Gastrocnemius medialis (tissue), 4 donors: ENCODE measurements at regions of chr5 and their contacts with region 1.

Region 1: DNA sequence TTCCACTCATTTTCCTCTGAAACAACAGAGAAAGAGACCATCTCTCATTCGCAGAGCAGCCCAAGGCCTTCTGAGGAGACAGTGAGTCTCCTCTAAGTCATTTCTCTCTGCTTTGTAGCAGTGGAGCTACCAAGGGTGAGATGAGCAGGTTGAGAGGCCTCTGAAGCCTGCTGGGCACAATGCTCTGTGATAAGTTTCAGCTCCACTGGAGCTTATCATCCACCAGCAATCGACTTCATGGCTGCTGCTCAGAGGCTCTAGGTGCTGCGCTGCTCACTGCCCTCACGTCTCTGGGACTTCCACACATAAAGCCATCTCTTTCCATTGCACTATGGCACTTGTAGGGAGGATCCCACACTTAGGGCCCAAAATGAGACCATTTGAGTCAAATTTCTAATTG is 96.3 kb downstream of the CMYA5 start:
- DNase-seq: no peak
- ATAC-seq: no peak
- H3K4me3 ChIP-seq: no peak overlapping the region
- H3K27ac ChIP-seq: peak overlapping the region; percentile 82 to 86 (median 84)
- H3K4me1 ChIP-seq: peaks cover 51 to 53% of the 10 kb centered on the region in 2 donors
- H3K27me3 ChIP-seq: no peaks in the 10 kb centered on the region
- CTCF ChIP-seq: no peak
- POLR2A ChIP-seq: no peak

Region 2: DNA sequence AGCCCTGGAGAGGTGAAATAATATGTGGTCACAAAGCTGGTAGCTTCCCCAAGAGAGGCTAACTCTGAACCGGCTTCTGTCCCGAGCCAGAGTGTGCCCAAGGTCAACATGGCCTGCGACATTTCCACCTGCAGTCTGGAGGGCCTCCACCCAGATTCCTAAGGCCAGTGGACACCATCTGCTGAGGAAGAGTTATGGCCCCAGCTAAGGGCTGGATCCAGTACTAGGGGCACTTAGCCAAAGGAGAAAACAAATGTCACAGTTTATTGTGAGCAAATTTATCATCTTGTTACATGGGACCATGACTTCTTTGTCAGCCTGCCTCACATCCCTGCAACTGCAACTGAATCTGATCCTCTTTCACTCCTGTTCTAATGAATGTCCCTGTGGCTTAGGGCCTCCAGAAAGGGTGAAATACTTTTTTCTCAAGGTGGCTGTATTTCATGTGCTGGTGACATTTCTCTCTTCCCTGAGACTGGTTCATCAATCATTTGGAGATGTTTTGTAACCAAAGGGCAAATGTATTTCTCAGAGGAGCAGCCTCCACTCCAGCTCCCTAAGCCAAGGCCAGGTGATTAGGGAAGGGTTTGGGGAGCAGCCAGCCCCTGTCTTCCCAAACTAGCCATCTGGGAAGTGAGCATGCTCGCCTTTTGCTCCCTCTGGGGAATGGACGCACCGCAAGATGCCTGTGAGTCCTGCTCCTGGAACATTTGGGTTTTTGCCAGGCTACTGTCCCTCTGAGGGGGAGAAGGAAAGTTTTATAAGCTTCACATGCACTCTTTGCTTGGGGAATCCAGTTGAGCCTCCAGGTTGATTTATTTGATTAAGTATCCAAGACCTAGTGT is 52.0 kb after region 1 on chr5:
- in situ Hi-C with region 1: no loop called
- intact Hi-C with region 1: loop called (anchors 10 kb)
- DNase-seq: peak in 1 of 2 donors; percentile 64
- ATAC-seq: peak; percentile 29 to 41
- H3K4me3 ChIP-seq: no peak overlapping the region
- H3K27ac ChIP-seq: peak overlapping the region; percentile 14 to 62 (median 48)
- H3K4me1 ChIP-seq: peaks cover 36 to 44% of the 10 kb centered on the region in 2 donors
- H3K27me3 ChIP-seq: no peaks in the 10 kb centered on the region
- CTCF ChIP-seq: no peak
- POLR2A ChIP-seq: no peak

Region 3: DNA sequence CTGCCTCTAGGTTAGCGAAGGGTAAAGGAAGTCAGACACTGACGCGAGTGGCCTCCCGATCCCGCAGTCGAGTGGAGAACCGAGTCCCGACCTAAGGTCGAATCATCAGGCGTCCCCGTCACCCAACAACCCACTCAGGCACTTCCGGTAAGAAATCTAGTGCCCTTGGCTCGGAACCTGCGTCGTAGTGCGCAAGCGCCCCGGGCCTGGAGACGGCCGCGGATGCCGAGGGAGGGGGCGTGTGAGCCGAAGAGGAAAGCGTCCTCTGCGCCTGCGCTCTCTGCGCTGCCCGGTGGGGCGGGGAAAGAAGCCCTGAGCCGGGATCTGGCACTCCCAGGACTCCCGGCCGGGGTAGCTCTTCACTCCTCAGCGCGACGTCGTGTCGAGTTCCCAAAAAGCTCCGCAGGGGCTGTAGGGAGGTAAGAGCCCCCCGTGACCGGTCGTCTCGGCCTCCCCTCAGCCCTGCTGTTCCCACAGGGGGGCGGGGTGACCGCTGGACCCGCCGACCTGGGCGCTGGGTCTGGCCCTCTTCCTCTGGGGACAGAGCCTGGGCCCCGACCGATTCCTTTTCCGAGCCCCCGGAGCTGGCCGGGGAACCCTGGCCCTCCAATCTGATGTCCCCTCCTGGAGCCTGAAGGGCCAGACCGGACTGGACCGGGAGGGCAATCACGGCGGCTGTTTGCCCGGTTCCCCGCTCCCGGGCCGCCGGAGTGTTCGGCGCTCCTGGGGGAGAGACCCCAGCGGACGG is 621.9 kb after region 1 on chr5 and contains the start of gene ZFYVE16:
- in situ Hi-C with region 1: no loop called
- intact Hi-C with region 1: no loop called
- DNase-seq: peak; percentile 95 to 97
- ATAC-seq: peak; percentile 94 to 95
- H3K4me3 ChIP-seq: peak within 1 kb of the TSS; percentile 88 to 98 (median 93)
- H3K27ac ChIP-seq: peak within 1 kb of the TSS; percentile 94 to 99 (median 96)
- H3K4me1 ChIP-seq: peaks cover 18 to 22% of the 10 kb centered on the region in 2 donors
- H3K27me3 ChIP-seq: no peaks in the 10 kb centered on the region
- CTCF ChIP-seq: peak; percentile 48 to 74 (median 60)
- POLR2A ChIP-seq: peak; percentile 87 to 93
- total RNA-seq, gene ZFYVE16: 9.7 to 19.1 (median 12.4) TPM